ENCODE measurements at regions of chr2 and their contacts with region 1.

Region 1: GRCh38 chr2:151238527-151239487 is 22.9 kb downstream of the RBM43 start:
- DNase-seq: peak; percentile 80
- H3K4me3 ChIP-seq: no peak overlapping the region
- H3K27ac ChIP-seq: no peak overlapping the region
- H3K4me1 ChIP-seq: peaks cover 7% of the 10 kb centered on the region
- H3K27me3 ChIP-seq: no peaks in the 10 kb centered on the region
- CTCF ChIP-seq: peak; percentile 53 to 57
- POLR2A ChIP-seq: no peak

Region 2: GRCh38 chr2:149561309-149561926 is 1677.4 kb before region 1 on chr2:
- CTCF ChIA-PET with region 1: interaction called, 25 read pairs
- POLR2A ChIA-PET with region 1: no interaction called
- dilution Hi-C with region 1: no loop called
- intact Hi-C with region 1: loop called (anchors 10 kb)
- DNase-seq: peak; percentile 57
- H3K4me3 ChIP-seq: no peak overlapping the region
- H3K27ac ChIP-seq: no peak overlapping the region
- H3K4me1 ChIP-seq: peaks cover 7% of the 10 kb centered on the region
- H3K27me3 ChIP-seq: no peaks in the 10 kb centered on the region
- CTCF ChIP-seq: peak; percentile 40 to 55
- POLR2A ChIP-seq: no peak

Region 3: DNA sequence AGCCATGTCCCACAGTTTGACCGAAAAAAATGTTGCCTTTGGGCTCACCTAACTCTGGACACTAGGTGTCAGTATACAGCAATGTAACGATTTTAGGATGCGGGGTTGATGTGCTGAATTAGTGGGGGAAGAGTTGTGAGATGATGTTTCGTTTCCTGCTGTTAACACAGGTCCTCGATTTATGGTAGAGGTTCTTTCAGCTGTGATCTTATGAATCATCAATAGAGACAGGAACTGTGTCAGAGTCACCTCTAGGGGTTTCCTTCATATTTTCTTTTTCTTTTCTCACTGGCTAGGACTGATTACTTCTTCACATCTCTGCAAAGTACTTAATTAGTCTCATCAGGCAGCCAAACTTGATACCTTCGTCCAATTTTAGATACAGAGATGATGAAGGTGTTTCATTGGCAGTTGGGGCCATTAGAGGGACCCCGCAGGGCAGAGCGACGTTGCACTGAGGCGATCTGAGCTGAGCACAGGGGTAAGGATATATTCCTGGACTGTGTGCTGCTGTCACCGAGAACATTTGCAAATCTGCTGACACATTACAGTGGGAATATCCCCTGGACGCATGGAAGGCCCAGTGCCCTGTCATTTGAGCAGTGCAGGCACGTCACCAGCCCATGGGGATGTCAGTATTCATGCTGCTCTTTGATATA is 1641.0 kb before region 1 on chr2:
- CTCF ChIA-PET with region 1: interaction called, 120 read pairs
- POLR2A ChIA-PET with region 1: no interaction called
- dilution Hi-C with region 1: no loop called
- intact Hi-C with region 1: loop called (anchors 1 kb)
- DNase-seq: peak; percentile 87
- H3K4me3 ChIP-seq: peak overlapping the region in 1 of 3 experiments; percentile 30
- H3K27ac ChIP-seq: peak overlapping the region; percentile 81
- H3K4me1 ChIP-seq: peaks cover 7% of the 10 kb centered on the region
- H3K27me3 ChIP-seq: no peaks in the 10 kb centered on the region
- CTCF ChIP-seq: peak; percentile 60 to 91
- POLR2A ChIP-seq: no peak

Region 4: DNA sequence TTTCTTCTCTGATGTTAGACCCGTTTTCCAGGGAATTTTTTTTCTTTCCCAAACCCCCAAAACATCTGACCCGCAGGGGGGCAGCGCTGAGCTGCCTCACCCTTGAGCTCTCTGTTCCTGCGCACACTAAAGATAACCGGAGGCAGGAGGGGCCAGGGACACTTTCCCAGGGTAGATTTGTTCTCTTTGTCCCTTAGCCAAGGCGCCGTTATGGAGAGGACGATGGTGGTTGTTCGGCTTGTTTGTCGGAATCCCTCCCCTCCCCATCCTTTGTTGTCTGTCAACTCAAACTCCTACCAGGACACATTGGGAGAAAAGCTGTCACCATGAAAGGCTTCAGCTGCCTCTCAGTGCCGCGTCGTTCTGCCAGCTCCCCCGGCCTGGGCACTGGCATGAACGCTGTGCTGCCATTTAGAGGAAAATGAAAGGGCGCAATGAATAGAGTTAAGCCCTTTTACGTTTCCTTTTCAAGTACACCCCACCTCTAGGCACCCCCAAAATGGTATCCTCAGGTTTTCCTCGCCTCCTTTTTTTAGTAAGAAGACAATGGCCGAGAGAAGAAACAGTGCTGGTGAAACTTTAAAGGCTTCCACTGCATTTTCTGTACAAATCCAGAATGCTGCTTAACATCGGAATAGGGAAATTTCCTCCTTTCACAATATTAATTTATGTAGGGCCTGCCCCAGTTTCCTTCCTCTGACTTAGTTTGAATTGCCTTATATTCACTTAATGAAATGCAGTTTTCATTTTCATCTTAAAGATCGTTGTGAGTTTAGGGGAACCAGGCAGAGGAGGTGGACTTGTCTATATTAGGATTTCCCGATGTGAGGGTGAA is 813.5 kb before region 1 on chr2:
- CTCF ChIA-PET with region 1: interaction called, 14 read pairs
- POLR2A ChIA-PET with region 1: no interaction called
- dilution Hi-C with region 1: no loop called
- intact Hi-C with region 1: loop called (anchors 1 kb)
- DNase-seq: peak; percentile 76
- H3K4me3 ChIP-seq: peak overlapping the region in 2 of 3 experiments; percentile 30 to 55
- H3K27ac ChIP-seq: peak overlapping the region; percentile 77
- H3K4me1 ChIP-seq: peaks cover 17% of the 10 kb centered on the region
- H3K27me3 ChIP-seq: no peaks in the 10 kb centered on the region
- CTCF ChIP-seq: peak; percentile 47 to 49
- POLR2A ChIP-seq: peak; percentile 33

Region 5: GRCh38 chr2:150610671-150611279 is 628.0 kb before region 1 on chr2:
- CTCF ChIA-PET with region 1: no interaction called
- POLR2A ChIA-PET with region 1: no interaction called
- dilution Hi-C with region 1: no loop called
- intact Hi-C with region 1: loop called (anchors 5 kb)
- DNase-seq: peak; percentile 45
- H3K4me3 ChIP-seq: no peak overlapping the region
- H3K27ac ChIP-seq: no peak overlapping the region
- H3K4me1 ChIP-seq: peaks cover 8% of the 10 kb centered on the region
- H3K27me3 ChIP-seq: no peaks in the 10 kb centered on the region
- CTCF ChIP-seq: peak; percentile 31 to 34
- POLR2A ChIP-seq: no peak

Region 6: GRCh38 chr2:150689590-150689989 is 549.2 kb before region 1 on chr2:
- CTCF ChIA-PET with region 1: no interaction called
- POLR2A ChIA-PET with region 1: no interaction called
- dilution Hi-C with region 1: no loop called
- intact Hi-C with region 1: no loop called
- DNase-seq: no peak
- H3K4me3 ChIP-seq: no peak overlapping the region
- H3K27ac ChIP-seq: no peak overlapping the region
- H3K4me1 ChIP-seq: peaks cover 3% of the 10 kb centered on the region
- H3K27me3 ChIP-seq: no peaks in the 10 kb centered on the region
- CTCF ChIP-seq: no peak
- POLR2A ChIP-seq: no peak

Region 7: DNA sequence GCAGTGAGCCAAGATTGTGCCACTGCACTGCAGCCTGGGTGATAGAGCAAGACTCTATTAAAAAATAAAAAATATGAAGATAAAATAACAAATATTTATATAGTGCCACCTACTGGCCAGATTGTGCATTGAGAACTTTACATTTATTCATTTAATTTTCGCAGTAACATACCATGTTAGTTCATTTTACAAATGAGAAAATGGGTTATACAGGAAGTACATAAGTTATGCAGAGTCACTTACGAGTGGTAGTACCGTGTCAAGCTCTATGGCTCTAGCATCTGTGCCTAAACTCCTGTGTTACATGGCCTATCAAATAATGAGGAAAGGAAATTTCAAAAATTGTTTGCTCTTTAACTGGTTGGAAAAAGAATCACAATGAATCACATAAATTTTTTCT is 198.8 kb after region 1 on chr2:
- CTCF ChIA-PET with region 1: interaction called, 13 read pairs
- POLR2A ChIA-PET with region 1: no interaction called
- dilution Hi-C with region 1: no loop called
- intact Hi-C with region 1: no loop called
- DNase-seq: peak; percentile 58
- H3K4me3 ChIP-seq: no peak overlapping the region
- H3K27ac ChIP-seq: no peak overlapping the region
- H3K4me1 ChIP-seq: no peaks in the 10 kb centered on the region
- H3K27me3 ChIP-seq: no peaks in the 10 kb centered on the region
- CTCF ChIP-seq: peak; percentile 25 to 39
- POLR2A ChIP-seq: no peak